Activated CD8-positive, alpha-beta T cell treated with anti-CD3 and anti-CD28 coated beads, Interleukin-2, amount 10 ng/mL, durations not matched to agents 7 days and 5 days (primary cell): ENCODE measurements at regions of chr7 and their contacts with region 1.

Region 1: GRCh38 chr7:130896898-130897514 is 163.0 kb upstream of the KLF14 start:
- DNase-seq: peak; percentile 79
- ATAC-seq: peak; percentile 80
- H3K4me3 Mint-ChIP-seq: no peak overlapping the region
- H3K27ac Mint-ChIP-seq: peak overlapping the region; percentile 68
- H3K4me1 Mint-ChIP-seq: peaks cover 73% of the 10 kb centered on the region
- H3K27me3 Mint-ChIP-seq: no peaks in the 10 kb centered on the region

Region 2: GRCh38 chr7:130521258-130521951 is 375.6 kb before region 1 on chr7:
- CTCF ChIA-PET with region 1: no interaction called
- POLR2A ChIA-PET with region 1: no interaction called
- DNase-seq: no peak
- ATAC-seq: no peak
- H3K4me3 Mint-ChIP-seq: no peak overlapping the region
- H3K27ac Mint-ChIP-seq: no peak overlapping the region
- H3K4me1 Mint-ChIP-seq: no peaks in the 10 kb centered on the region
- H3K27me3 Mint-ChIP-seq: no peaks in the 10 kb centered on the region

Region 3: GRCh38 chr7:130880668-130881067 is 16.3 kb before region 1 on chr7:
- CTCF ChIA-PET with region 1: interaction called, 49 read pairs
- POLR2A ChIA-PET with region 1: no interaction called
- DNase-seq: no peak
- ATAC-seq: no peak
- H3K4me3 Mint-ChIP-seq: no peak overlapping the region
- H3K27ac Mint-ChIP-seq: no peak overlapping the region
- H3K4me1 Mint-ChIP-seq: peaks cover 38% of the 10 kb centered on the region
- H3K27me3 Mint-ChIP-seq: no peaks in the 10 kb centered on the region

Region 4: DNA sequence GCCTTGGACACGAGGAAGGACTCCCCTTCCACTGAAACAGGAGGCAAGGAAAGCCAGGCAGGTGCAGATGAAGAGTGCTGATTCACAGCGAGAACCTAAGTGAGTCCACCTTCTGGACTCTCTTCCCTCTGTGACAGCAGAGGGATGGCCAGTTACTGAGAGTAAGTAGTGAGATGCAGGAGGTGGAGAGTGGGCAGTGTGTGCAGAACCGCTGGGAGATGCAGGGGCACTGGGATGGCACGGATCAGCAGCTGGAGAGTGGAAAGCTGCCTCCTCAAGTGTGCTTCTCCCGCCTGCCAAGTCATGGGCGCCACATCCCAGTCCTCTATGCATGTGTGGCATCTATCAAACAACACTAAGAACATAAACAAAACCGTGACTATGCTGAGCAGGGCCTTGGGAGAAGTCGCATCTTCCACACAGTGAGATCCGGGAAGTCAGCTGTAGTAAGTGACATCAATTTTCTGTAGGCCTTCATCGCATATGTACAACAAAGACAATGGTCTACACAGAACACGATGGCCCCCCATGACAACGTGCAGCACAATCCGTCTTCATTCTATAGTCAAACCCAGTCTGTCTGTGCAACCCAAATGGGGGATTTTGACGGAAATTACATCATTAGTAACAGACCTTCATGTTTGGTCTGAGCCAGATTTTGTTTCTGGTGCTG is 54.4 kb after region 1 on chr7:
- CTCF ChIA-PET with region 1: interaction called, 60 read pairs
- POLR2A ChIA-PET with region 1: interaction called, 6 read pairs
- DNase-seq: no peak
- ATAC-seq: peak; percentile 3
- H3K4me3 Mint-ChIP-seq: no peak overlapping the region
- H3K27ac Mint-ChIP-seq: no peak overlapping the region
- H3K4me1 Mint-ChIP-seq: peaks cover 61% of the 10 kb centered on the region
- H3K27me3 Mint-ChIP-seq: no peaks in the 10 kb centered on the region

Region 5: GRCh38 chr7:130982160-130982638 is 85.2 kb after region 1 on chr7:
- CTCF ChIA-PET with region 1: interaction called, 75 read pairs
- POLR2A ChIA-PET with region 1: interaction called, 5 read pairs
- DNase-seq: peak; percentile 50
- ATAC-seq: peak; percentile 86
- H3K4me3 Mint-ChIP-seq: no peak overlapping the region
- H3K27ac Mint-ChIP-seq: no peak overlapping the region
- H3K4me1 Mint-ChIP-seq: peaks cover 29% of the 10 kb centered on the region
- H3K27me3 Mint-ChIP-seq: no peaks in the 10 kb centered on the region

Region 6: DNA sequence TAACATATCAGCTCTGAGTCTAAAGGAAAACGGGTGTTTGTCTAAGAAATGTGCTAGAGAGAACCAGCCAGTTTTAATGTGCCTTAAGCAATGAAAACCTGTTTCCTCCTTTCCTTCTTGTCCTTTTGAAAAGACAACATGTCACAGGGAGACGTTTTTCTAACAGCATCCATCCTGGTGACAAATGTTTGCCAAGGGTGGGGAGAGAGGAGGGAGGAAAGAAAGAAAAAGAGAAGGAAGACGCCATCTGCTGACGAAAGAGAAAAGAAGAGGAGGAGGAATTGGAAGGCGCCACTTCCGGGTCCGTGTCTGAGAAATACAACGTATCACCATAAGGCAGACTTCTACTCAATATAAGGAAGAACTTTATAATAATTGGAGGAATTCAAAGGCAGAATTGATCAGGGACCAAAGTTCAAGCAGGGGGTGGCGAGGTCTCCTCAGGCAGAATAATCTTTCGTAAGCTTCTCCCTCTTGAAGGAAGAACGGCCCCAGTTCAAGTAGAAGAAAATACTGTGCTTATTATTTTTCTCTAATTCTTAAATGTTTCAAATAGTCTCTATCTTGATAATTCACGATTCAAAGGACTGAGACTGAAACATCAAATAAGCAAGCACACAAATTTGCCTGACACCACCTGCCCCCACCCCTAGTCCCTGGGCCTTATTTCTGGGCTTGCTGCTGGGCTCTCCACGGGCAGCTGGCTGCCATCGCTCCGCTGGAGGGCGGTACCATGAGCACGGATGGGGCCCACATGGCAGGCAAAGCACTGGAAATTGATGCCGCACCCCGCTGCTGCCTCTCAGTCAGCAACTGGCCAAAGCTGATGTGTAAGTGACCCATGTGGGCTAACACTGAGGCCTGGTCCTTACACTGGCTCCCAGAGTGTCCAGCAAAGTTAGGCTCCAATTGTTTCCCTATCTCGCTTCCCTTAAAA is 110.7 kb after region 1 on chr7:
- CTCF ChIA-PET with region 1: interaction called, 49 read pairs
- POLR2A ChIA-PET with region 1: no interaction called
- DNase-seq: peak; percentile 82
- ATAC-seq: peak; percentile 70
- H3K4me3 Mint-ChIP-seq: peak overlapping the region; percentile 69
- H3K27ac Mint-ChIP-seq: peak overlapping the region; percentile 94
- H3K4me1 Mint-ChIP-seq: peaks cover 63% of the 10 kb centered on the region
- H3K27me3 Mint-ChIP-seq: no peaks in the 10 kb centered on the region

Region 7: DNA sequence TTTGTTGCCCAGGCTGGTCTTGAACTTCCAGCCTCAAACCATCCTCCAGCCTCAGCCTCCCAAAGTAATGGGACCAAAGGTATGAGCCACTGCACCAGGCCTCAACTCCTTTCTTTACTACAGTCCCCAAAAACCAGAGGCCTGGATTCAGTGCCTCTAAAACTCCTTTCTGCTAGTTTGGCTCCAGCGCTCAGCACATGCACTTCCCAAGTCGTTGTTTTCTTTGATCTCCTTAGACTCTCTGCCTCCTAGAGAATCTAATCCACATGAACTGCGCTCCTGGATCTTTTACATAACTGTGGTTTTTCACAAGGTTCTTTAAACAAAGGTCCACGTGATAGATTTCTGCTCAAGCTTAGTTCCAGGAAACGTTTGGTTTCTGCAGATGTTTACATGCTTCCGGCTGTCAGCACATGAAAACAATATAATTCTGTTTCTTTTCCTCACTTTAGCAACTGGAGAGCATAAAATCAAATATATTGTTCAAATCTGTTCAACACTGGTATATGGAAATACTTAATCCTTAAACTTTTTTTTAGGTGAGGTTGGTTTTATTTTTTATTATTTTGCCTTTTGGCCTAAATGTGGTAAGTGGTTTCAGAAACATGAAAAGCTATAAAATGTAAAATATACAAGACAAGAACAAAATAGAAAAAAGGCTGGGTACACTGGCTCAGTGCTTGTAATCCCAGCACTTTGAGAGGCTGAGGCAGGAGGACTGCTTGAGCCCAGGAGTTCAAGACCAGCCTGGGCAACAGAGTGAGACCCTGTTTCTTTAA is 160.2 kb after region 1 on chr7:
- CTCF ChIA-PET with region 1: interaction called, 16 read pairs
- POLR2A ChIA-PET with region 1: no interaction called
- DNase-seq: peak; percentile 62
- ATAC-seq: peak; percentile 66
- H3K4me3 Mint-ChIP-seq: peak overlapping the region; percentile 70
- H3K27ac Mint-ChIP-seq: peak overlapping the region; percentile 95
- H3K4me1 Mint-ChIP-seq: peaks cover 57% of the 10 kb centered on the region
- H3K27me3 Mint-ChIP-seq: no peaks in the 10 kb centered on the region